Activated T-helper 2 cell treated with anti-CD3 and anti-CD28 coated beads, Interferon-gamma antibody, Interleukin-2, Interleukin-4, amounts not matched to agents 10 μg/mL and 5 μg/mL and 100 μg/mL, durations not matched to agents 14 hours and 24 hours and 36 hours (primary cell): ENCODE measurements at regions of chr9 and their contacts with region 1.

Region 1: DNA sequence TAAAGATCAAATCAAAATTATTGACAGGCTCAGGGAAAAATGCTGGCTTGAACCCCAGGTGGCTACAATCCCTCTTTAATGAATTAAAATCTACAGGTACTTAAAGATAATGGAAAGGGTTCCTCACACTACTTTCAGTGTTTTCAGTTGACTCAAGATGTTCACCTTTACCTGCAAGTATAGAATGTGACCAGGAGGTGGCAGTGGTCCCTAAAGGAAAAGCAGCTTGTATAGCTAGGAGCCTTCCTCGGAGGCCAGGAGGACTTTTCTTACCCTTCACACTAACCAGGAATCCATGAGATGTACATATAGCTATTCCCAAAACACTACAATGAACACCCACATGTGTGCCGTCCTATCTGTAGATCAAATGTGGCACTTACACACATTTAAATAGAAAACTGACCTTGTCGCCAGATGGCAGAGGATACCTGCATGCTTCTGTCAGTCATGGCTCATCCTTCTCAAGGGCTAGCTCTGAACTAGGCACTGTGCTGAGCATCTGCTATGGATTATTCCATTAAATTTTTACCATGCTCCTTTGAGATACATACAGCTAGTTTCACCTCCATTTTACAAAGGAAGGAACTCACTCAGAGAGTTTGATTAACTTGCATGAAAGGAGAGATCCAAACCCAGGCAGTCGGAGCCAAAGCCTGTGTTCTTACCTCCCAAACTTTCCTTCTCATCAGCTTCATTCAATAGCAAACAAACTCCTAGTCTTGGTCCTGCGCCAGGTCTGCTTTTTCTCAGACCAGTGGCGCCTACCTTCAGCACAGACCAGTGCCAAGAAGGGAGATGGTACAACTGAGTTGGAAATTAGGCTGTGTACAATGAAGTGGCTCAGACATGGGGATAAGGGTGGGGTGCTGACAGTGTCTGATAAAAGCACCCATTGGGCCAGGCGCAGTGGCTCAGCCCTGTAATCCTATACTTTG is 24.5 kb downstream of the C9orf152 start:
- DNase-seq: peak; percentile 28
- H3K4me3 Mint-ChIP-seq: no peak overlapping the region
- H3K27ac Mint-ChIP-seq: no peak overlapping the region
- H3K4me1 Mint-ChIP-seq: peaks cover 15% of the 10 kb centered on the region
- H3K27me3 Mint-ChIP-seq: no peaks in the 10 kb centered on the region

Region 2: DNA sequence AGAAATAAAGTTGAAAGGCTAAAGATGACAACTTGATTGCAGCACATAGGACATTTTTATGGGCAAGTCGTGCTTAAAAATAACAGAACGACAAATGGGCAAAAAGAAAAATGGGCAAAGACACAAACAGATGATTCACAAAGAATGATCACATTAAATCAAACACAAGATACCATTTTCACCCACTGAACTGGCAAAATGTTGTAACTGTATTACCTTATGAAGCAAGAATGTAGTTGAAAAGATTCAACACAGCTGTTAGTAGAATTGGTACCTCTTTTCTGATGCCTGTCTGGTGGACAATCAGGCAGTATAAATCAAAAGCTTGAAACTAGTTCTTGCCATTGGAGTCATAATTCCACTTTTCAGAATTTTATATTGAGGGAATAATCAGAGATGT is 484.5 kb before region 1 on chr9:
- intact Hi-C with region 1: no loop called
- DNase-seq: no peak
- H3K4me3 Mint-ChIP-seq: no peak overlapping the region
- H3K27ac Mint-ChIP-seq: no peak overlapping the region
- H3K4me1 Mint-ChIP-seq: no peaks in the 10 kb centered on the region
- H3K27me3 Mint-ChIP-seq: no peaks in the 10 kb centered on the region

Region 3: DNA sequence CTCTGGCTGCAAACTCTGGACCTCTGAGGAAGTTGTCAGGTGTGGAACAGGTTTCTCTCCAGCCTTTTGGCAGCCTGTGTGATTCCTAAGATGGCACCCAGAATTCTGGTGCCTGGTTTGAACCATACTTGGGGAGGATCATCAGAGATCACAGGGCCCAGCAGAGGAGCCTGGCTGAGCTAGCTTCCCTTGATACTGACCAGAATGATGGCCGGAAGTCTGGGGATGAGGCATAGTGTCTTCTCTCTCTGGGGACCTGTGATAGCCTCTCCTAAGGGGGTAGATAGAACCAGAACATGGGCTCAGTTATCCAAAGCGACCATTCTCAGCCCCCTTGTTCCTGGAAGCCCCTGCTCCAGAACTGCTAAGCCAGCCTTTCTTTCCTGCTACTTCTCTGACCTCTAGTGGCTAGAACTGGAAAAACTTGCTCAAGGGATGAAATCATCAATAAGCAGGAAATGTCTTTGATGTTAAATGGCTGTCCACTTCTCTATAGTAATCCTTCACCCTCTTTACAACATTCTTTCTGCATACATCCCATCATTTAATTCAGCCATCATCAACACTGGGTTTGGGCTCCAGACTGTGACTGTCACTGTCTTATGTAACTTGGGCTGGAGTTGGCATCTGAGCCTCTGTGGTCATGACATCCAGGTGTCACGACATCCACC is 30.6 kb before region 1 on chr9:
- intact Hi-C with region 1: no loop called
- DNase-seq: no peak
- H3K4me3 Mint-ChIP-seq: peak overlapping the region; percentile 37
- H3K27ac Mint-ChIP-seq: peak overlapping the region; percentile 77
- H3K4me1 Mint-ChIP-seq: peaks cover 95% of the 10 kb centered on the region
- H3K27me3 Mint-ChIP-seq: no peaks in the 10 kb centered on the region

Region 4: GRCh38 chr9:110427497-110428104 is 244.1 kb after region 1 on chr9:
- intact Hi-C with region 1: loop called (anchors 2 kb)
- DNase-seq: peak; percentile 13
- H3K4me3 Mint-ChIP-seq: no peak overlapping the region
- H3K27ac Mint-ChIP-seq: no peak overlapping the region
- H3K4me1 Mint-ChIP-seq: no peaks in the 10 kb centered on the region
- H3K27me3 Mint-ChIP-seq: no peaks in the 10 kb centered on the region

Region 5: DNA sequence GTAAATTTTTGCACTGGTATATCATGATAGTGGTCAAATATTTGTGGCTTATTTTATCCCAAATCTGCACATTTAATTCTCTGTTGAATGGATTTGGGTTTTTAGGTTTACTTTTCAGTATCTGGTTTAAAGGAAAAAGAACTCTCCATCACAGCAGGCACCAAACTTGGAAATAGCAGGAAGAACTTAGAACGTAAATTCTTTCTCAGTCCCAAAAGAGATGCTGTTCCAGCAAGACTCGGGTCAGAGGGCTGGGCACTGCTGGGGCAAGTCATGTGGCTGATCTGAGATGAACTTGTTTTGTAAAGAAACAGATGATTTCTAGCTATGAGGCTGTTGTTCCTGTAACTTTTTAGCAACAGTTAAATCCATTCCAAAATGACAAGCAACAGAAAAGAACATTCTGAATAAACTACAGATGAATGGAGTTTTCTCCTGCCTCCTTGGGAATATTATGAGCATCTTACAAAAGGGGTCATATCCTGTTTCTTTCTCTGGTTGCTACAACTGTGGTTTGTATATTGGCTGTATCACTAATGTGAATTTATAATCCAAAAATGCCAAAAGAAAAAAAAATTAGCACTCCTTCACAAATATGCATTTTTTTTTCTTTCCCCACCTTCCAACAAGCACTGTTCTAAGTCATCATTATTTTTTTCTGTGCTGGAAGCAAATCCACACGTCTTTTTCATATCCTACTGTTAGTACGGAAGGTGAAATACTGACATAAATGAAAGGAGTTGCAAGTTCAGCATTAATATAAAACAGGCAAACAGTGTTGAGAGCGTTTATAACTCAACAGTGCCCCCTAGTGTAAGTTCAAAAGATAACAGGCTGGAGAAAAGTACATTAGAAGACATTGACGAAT is 1115.5 kb after region 1 on chr9:
- intact Hi-C with region 1: loop called (anchors 10 kb)
- DNase-seq: no peak
- H3K4me3 Mint-ChIP-seq: no peak overlapping the region
- H3K27ac Mint-ChIP-seq: no peak overlapping the region
- H3K4me1 Mint-ChIP-seq: no peaks in the 10 kb centered on the region
- H3K27me3 Mint-ChIP-seq: peaks cover 9% of the 10 kb centered on the region